Prostate gland (tissue), 2 donors: ENCODE measurements at regions of chr13 and their contacts with region 1.

Region 1: GRCh38 chr13:30453727-30454126 is 12.0 kb downstream of the HMGB1 start:
- DNase-seq: no peak
- H3K4me3 ChIP-seq: no peak overlapping the region
- H3K27ac ChIP-seq: no peak overlapping the region
- H3K4me1 ChIP-seq: no peaks in the 10 kb centered on the region
- H3K27me3 ChIP-seq: no peaks in the 10 kb centered on the region
- CTCF ChIP-seq: no peak
- POLR2A ChIP-seq: no peak

Region 2: GRCh38 chr13:29362849-29363604 is 1090.7 kb before region 1 on chr13:
- intact Hi-C with region 1: no loop called
- DNase-seq: no peak
- H3K4me3 ChIP-seq: no peak overlapping the region
- H3K27ac ChIP-seq: no peak overlapping the region
- H3K4me1 ChIP-seq: no peaks in the 10 kb centered on the region
- H3K27me3 ChIP-seq: no peaks in the 10 kb centered on the region
- CTCF ChIP-seq: peak; percentile 31 to 68 (median 52)
- POLR2A ChIP-seq: no peak

Region 3: GRCh38 chr13:30257468-30258099 is 196.1 kb before region 1 on chr13:
- intact Hi-C with region 1: loop called (anchors 10 kb)
- DNase-seq: no peak
- H3K4me3 ChIP-seq: no peak overlapping the region
- H3K27ac ChIP-seq: peak overlapping the region; percentile 27 to 29
- H3K4me1 ChIP-seq: peaks cover 4% of the 10 kb centered on the region
- H3K27me3 ChIP-seq: no peaks in the 10 kb centered on the region
- CTCF ChIP-seq: no peak
- POLR2A ChIP-seq: no peak

Region 4: DNA sequence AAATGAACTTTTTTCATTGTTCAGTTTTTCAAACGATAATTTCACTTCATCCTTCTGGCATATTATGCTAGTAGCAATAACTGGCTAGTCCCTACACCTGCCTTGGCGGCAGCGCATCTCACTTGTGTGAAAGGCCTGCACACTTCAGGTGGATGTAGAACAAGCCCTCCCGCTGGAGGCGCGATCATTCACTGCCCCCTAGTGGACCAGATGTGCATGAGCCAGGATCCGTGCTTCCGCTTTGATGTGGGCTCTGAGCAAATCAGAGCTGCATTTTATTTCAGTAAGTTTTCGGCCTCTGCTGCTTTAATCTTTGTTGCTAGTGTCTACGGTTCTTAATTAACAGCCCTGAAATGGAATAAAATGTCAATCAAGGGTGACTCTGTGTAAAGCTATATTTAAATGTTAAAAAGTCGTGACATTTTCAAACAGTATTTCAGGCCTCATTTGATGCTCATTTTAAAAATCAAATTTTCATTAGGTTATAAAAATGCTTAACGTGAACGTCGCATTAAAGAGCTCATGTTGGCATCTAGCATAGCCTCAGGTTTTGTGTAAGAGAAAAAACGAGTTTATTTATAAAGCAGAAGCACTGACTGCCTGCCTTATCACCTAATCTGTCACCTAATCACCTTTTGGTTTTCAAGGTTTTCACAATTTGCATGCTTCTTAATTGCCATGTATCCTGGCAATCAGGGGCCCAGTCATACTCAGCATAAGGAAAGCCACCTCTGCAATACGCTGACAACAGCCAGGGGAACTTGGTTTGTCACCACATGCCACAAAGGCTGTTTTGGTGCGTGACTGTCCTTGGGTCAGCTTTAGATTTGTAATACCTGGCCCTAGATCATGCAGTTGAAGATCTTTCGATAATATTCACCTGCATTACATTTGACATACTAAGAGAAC is 590.9 kb after region 1 on chr13:
- intact Hi-C with region 1: loop called (anchors 10 kb)
- DNase-seq: peak; percentile 74
- H3K4me3 ChIP-seq: no peak overlapping the region
- H3K27ac ChIP-seq: no peak overlapping the region
- H3K4me1 ChIP-seq: no peaks in the 10 kb centered on the region
- H3K27me3 ChIP-seq: no peaks in the 10 kb centered on the region
- CTCF ChIP-seq: peak; percentile 82 to 89 (median 88)
- POLR2A ChIP-seq: no peak